ENCODE measurements at regions of chr2 and their contacts with region 1.

Region 1: GRCh38 chr2:85327822-85328617 is at the start of gene TGOLN2:
- DNase-seq: peak; percentile 89 to 92 (median 91)
- H3K4me3 ChIP-seq: peak within 1 kb of the TSS; percentile 52 to 97 (median 72)
- H3K4me3 Mint-ChIP-seq: peak within 1 kb of the TSS; percentile 98 to 100
- H3K27ac ChIP-seq: peak within 1 kb of the TSS; percentile 98 to 99
- H3K27ac Mint-ChIP-seq: peak within 1 kb of the TSS; percentile 97 to 100 (median 100)
- H3K4me1 ChIP-seq: peaks cover 46 to 53% of the 10 kb centered on the region in 2 donors
- H3K4me1 Mint-ChIP-seq: peaks cover 46% of the 10 kb centered on the region
- H3K27me3 ChIP-seq: no peaks in the 10 kb centered on the region
- H3K27me3 Mint-ChIP-seq: peaks cover 0 to 2% (median 0%) of the 10 kb centered on the region in 3 donors
- CTCF ChIP-seq: no peak
- polyA plus RNA-seq, gene TGOLN2: 68.2 to 157 (median 111) TPM

Region 2: DNA sequence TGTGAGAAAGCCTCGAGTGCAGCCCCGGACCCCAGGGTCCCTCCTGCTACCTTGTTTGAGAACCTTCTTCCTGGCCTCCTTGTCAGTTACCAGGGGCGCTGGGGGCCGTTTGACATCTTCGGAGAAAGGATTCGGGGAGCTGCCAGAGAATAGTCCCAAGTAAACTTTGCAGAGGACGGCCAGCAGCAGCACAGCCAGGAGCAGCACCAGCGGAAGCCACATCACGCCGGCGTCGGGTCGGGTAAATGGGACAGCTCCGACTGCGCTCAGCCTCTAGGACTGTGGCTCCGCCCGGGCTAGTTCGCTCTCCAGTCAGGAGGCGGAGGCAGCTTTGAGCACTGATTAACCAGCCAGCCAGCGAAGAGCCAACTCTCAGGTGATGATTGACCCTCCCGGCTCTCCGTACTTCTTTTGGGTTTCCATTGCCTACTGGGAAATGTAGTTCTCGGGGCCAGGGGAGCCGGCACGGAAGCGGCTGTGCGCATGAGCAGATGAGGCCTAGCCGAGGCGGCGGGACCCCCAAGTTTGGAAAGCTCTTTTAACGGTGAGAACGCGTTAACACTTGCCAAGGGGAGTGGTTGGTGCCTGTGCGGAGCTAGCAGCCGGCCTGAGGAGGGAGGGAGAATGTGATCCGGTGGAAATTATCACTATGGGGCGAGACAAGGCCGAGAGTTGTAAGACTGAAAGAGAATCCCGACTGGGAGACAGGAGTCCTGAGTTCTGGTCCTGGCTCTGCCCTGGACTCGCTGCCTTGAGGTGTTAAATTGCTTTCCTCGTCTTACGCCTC is 26.5 kb after region 1 on chr2 and contains the starts of genes ELMOD3 and RETSAT:
- intact Hi-C with region 1: loop called in 1 of 2 experiments (anchors 2 kb)
- DNase-seq: peak; percentile 96 to 98 (median 97)
- H3K4me3 ChIP-seq: peak within 1 kb of the TSS; percentile 78 to 93 (median 88)
- H3K4me3 Mint-ChIP-seq: peak within 1 kb of the TSS; percentile 95 to 100
- H3K27ac ChIP-seq: peak within 1 kb of the TSS; percentile 67 to 91
- H3K27ac Mint-ChIP-seq: peak within 1 kb of the TSS; percentile 94 to 100 (median 98)
- H3K4me1 ChIP-seq: peaks cover 14 to 22% of the 10 kb centered on the region in 2 donors
- H3K4me1 Mint-ChIP-seq: peaks cover 33% of the 10 kb centered on the region
- H3K27me3 ChIP-seq: no peaks in the 10 kb centered on the region
- H3K27me3 Mint-ChIP-seq: peaks cover 0 to 4% (median 0%) of the 10 kb centered on the region in 3 donors
- CTCF ChIP-seq: no peak
- polyA plus RNA-seq, gene ELMOD3: 6.1 to 53.3 (median 7.2) TPM
- polyA plus RNA-seq, gene RETSAT: 12.4 to 15.8 (median 15.0) TPM

Region 3: DNA sequence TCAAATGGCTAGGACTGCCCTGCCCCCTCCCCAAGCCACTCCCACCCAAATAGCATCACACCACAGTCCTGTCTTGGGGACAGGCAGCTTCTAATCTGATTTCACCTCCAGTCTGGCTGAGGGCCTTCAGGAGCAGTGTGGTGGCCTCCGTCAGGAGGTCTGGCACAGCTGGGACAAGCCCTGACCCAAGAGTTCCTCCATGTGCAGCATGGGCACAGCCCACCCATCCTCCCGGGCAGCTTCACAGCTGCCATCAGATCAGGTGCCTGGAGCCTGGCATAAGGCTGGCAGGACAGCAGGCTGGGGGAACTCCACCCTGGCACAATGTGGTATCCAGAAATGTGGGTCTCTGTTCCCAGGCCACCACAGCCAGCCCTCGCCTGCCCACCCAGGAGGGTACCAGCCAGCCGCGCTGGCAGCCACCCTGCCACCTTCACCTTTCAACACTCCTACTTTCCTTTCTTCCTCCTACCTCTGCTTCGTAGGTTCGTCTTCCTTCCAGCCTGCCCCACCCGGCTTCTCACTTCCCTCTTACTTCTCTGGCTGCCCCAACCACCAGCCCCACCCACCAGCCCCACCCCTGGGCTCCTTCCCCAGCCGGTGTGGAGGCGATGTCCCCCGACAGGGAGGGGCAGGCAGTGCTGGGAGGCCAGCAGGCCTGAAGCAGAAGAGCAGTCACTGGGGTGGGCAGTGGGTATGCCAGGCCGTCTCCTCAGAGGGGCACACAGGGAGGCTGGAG is 82.0 kb after region 1 on chr2 and contains the start of gene CAPG:
- intact Hi-C with region 1: loop called in 1 of 2 experiments (anchors 10 kb)
- DNase-seq: peak; percentile 75 to 80 (median 80)
- H3K4me3 ChIP-seq: peak within 1 kb of the TSS; percentile 38 to 89 (median 66)
- H3K4me3 Mint-ChIP-seq: peak within 1 kb of the TSS; percentile 86 to 95
- H3K27ac ChIP-seq: peak within 1 kb of the TSS; percentile 85 to 90
- H3K27ac Mint-ChIP-seq: peak within 1 kb of the TSS; percentile 93 to 96 (median 95)
- H3K4me1 ChIP-seq: peaks cover 86 to 100% of the 10 kb centered on the region in 2 donors
- H3K4me1 Mint-ChIP-seq: peaks cover 91% of the 10 kb centered on the region
- H3K27me3 ChIP-seq: no peaks in the 10 kb centered on the region
- H3K27me3 Mint-ChIP-seq: peaks cover 0 to 6% (median 3%) of the 10 kb centered on the region in 3 donors
- CTCF ChIP-seq: no peak
- polyA plus RNA-seq, gene CAPG: 474 to 847 (median 631) TPM

Measured in CD14-positive monocyte (primary cell).